ENCODE measurements at regions of chr20 and their contacts with region 1.

Region 1: GRCh38 chr20:5191829-5192569 is 65.2 kb downstream of the CDS2 start:
- DNase-seq: peak; percentile 61
- ATAC-seq: peak; percentile 79
- H3K4me3 ChIP-seq: peak overlapping the region; percentile 8; the same call in 1 of the 2 replicates
- H3K27ac ChIP-seq: peak overlapping the region; percentile 16
- H3K4me1 ChIP-seq: peaks cover 34% of the 10 kb centered on the region
- H3K27me3 ChIP-seq: no peaks in the 10 kb centered on the region
- CTCF ChIP-seq: peak; percentile 67 to 82 (median 80)
- EP300 ChIP-seq: no peak
- POLR2A ChIP-seq: no peak
- RAD21 ChIP-seq: peak; percentile 93

Region 2: DNA sequence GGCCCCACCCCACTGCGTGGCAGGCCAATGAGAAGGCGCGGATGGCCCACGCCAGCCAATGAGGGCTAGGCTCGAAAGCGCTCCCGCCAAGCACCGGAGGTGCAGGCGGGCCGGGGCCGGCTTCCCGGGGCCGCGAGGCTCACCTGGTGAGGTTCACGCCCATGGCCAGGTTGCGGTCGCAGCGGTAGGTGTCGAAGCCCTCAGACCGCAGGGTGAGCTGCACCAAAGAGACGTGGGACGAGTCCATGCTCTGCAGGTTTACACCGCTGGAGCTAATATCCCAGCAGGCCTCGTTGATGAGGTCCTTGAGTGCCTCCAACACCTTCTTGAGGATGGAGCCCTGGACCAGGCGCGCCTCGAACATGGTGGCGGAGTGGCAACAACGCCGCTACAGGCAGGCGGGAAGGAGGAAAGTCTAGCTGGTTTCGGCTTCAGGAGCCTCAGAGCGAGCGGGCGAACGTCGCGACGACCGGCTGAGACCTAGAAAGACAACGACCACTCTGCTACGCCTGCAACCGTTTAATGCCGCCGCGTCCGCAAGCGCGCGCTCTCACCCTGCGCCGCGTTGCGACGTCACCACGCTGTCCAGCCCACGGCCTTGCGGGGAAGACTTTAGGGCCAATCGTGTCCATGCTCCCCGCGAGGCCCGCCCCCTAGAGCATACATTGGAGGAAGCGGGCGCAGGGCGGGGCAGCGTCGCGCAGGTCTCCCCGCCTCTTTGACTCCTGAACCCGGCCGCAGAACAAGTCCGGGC is 72.4 kb before region 1 on chr20 and contains the start of gene PCNA:
- CTCF ChIA-PET with region 1: interaction called, 386 read pairs
- POLR2A ChIA-PET with region 1: interaction called, 9 read pairs
- RAD21 ChIA-PET with region 1: interaction called, 345 read pairs
- SMC1A ChIA-PET with region 1: interaction called, 229 read pairs
- in situ Hi-C with region 1: loop called (anchors 5 kb)
- intact Hi-C with region 1: no loop called
- DNase-seq: peak; percentile 90
- ATAC-seq: peak; percentile 94
- H3K4me3 ChIP-seq: peak within 1 kb of the TSS; percentile 84
- H3K27ac ChIP-seq: peak within 1 kb of the TSS; percentile 94
- H3K4me1 ChIP-seq: peaks cover 4% of the 10 kb centered on the region; the same call in 1 of the 2 replicates
- H3K27me3 ChIP-seq: no peaks in the 10 kb centered on the region
- CTCF ChIP-seq: no peak
- EP300 ChIP-seq: no peak
- POLR2A ChIP-seq: peak; percentile 98
- RAD21 ChIP-seq: no peak
- polyA plus RNA-seq, gene PCNA: 651 to 694 TPM

Region 3: DNA sequence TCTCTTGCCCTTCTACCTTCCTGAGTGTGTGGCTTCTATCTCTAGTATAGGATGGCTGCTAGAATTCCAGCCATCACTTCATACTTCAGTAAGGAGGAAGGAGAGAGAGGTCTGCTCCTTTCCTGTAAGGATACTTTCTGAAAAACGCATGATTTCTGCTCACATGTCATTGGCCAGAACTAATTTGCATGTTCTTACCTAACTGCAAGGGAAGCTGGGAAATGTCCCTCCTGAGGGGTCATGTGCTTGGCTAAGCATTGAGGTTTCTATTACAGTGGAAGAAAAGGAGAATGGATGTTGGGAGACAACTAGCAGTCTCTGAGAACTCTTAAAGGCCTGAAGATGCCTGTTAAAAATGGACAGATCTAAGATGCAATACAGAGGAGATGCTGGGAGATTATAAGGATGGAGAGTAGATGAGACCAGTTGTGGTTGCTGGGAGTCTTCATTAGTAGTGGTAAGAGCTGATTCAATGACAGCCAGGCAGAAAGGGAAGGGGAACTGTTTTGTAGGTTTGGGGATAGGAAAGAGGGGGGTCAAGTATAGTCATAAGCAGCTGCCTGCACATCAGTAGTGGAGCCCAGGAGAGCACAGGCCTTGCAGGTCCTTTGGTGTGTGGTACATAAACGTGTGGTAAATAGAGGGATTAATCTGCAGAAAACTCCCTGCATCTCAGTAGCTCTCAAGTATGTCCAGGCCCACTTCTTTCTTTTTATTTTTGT is 45.0 kb before region 1 on chr20:
- CTCF ChIA-PET with region 1: interaction called, 18 read pairs
- POLR2A ChIA-PET with region 1: no interaction called
- RAD21 ChIA-PET with region 1: interaction called, 10 read pairs
- SMC1A ChIA-PET with region 1: interaction called, 6 read pairs
- in situ Hi-C with region 1: no loop called
- intact Hi-C with region 1: no loop called
- DNase-seq: no peak
- ATAC-seq: peak; percentile 41
- H3K4me3 ChIP-seq: no peak overlapping the region
- H3K27ac ChIP-seq: peak overlapping the region; percentile 35; the same call in 1 of the 2 replicates
- H3K4me1 ChIP-seq: peaks cover 27% of the 10 kb centered on the region
- H3K27me3 ChIP-seq: no peaks in the 10 kb centered on the region
- CTCF ChIP-seq: no peak
- EP300 ChIP-seq: no peak
- POLR2A ChIP-seq: no peak
- RAD21 ChIP-seq: no peak

Region 4: GRCh38 chr20:5181956-5182355 is 10.0 kb before region 1 on chr20:
- CTCF ChIA-PET with region 1: interaction called, 19 read pairs
- POLR2A ChIA-PET with region 1: interaction called, 4 read pairs
- RAD21 ChIA-PET with region 1: interaction called, 3 read pairs
- SMC1A ChIA-PET with region 1: interaction called, 5 read pairs
- in situ Hi-C with region 1: no loop called
- intact Hi-C with region 1: no loop called
- DNase-seq: no peak
- ATAC-seq: no peak
- H3K4me3 ChIP-seq: no peak overlapping the region
- H3K27ac ChIP-seq: no peak overlapping the region
- H3K4me1 ChIP-seq: no peaks in the 10 kb centered on the region
- H3K27me3 ChIP-seq: no peaks in the 10 kb centered on the region
- CTCF ChIP-seq: no peak
- EP300 ChIP-seq: no peak
- POLR2A ChIP-seq: no peak
- RAD21 ChIP-seq: no peak

Region 5: GRCh38 chr20:5222919-5223634 is 31.1 kb after region 1 on chr20:
- CTCF ChIA-PET with region 1: interaction called, 29 read pairs
- POLR2A ChIA-PET with region 1: no interaction called
- RAD21 ChIA-PET with region 1: interaction called, 18 read pairs
- SMC1A ChIA-PET with region 1: interaction called, 10 read pairs
- in situ Hi-C with region 1: no loop called
- intact Hi-C with region 1: no loop called
- DNase-seq: peak; percentile 13
- ATAC-seq: peak; percentile 92
- H3K4me3 ChIP-seq: no peak overlapping the region
- H3K27ac ChIP-seq: no peak overlapping the region
- H3K4me1 ChIP-seq: no peaks in the 10 kb centered on the region
- H3K27me3 ChIP-seq: no peaks in the 10 kb centered on the region
- CTCF ChIP-seq: peak; percentile 75 to 94 (median 91)
- EP300 ChIP-seq: no peak
- POLR2A ChIP-seq: no peak
- RAD21 ChIP-seq: peak; percentile 75

Measured in GM12878 (cell line).